ENCODE measurements at regions of chr2 and their contacts with region 1.

Region 1: GRCh38 chr2:1162768-1163584 is 212.3 kb downstream of the SNTG2 start:
- DNase-seq: peak in 7 of 9 donors; percentile 47 to 74 (median 58)
- ATAC-seq: peak; percentile 87
- H3K4me3 ChIP-seq: no peak overlapping the region
- H3K4me3 Mint-ChIP-seq: peak overlapping the region; percentile 56 to 89 (median 82)
- H3K27ac ChIP-seq: peak overlapping the region; percentile 67
- H3K27ac Mint-ChIP-seq: peak overlapping the region; percentile 91 to 100 (median 96)
- H3K4me1 ChIP-seq: peaks cover 0 to 23% of the 10 kb centered on the region in 2 donors
- H3K4me1 Mint-ChIP-seq: peaks cover 20 to 66% (median 52%) of the 10 kb centered on the region in 7 donors
- H3K27me3 ChIP-seq: no peaks in the 10 kb centered on the region
- H3K27me3 Mint-ChIP-seq: no peaks in the 10 kb centered on the region

Region 2: GRCh38 chr2:694906-695510 is 468.0 kb before region 1 on chr2:
- CTCF ChIA-PET with region 1: no interaction called
- POLR2A ChIA-PET with region 1: no interaction called
- intact Hi-C with region 1: no loop called
- DNase-seq: no peak
- ATAC-seq: no peak
- H3K4me3 ChIP-seq: no peak overlapping the region
- H3K4me3 Mint-ChIP-seq: no peak overlapping the region
- H3K27ac ChIP-seq: no peak overlapping the region
- H3K27ac Mint-ChIP-seq: no peak overlapping the region
- H3K4me1 ChIP-seq: no peaks in the 10 kb centered on the region
- H3K4me1 Mint-ChIP-seq: peaks cover 0 to 3% (median 0%) of the 10 kb centered on the region in 7 donors
- H3K27me3 ChIP-seq: no peaks in the 10 kb centered on the region
- H3K27me3 Mint-ChIP-seq: peaks cover 14 to 32% (median 22%) of the 10 kb centered on the region in 5 donors

Region 3: DNA sequence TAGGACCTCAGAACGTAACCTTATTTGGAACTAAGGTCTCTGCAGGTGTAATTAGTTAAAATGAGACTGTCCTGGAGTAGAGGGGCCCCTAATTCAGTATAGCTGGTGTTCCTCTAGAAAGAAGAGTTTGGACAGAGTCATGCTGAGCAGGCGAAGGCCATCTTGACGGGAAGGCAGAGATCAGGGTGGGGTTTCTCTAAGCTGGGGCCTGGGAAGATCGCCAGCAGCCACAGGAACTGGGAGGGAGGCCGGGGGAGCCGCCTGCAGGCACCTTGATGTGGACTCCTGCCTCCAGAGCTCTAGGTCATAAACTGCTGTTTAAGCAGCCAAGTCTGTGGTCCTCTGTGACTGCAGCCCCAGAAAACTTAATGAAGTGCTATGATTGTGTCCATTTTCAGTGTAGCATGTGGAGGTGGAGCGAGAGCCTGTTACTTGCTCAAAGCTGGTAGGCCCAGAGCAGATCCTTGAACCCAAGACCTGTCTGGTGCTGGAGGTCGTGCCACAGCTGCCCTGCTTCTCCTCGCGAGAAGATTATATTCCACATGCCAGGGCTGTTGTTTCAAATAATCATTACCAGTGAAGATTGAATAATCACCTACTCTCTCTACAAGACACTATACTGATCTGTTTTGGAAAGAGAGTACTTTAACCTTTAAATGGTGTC is 356.0 kb after region 1 on chr2:
- CTCF ChIA-PET with region 1: no interaction called
- POLR2A ChIA-PET with region 1: no interaction called
- intact Hi-C with region 1: loop called in 1 of 2 experiments (anchors 10 kb)
- DNase-seq: peak in 1 of 9 donors; percentile 7
- ATAC-seq: peak; percentile 1
- H3K4me3 ChIP-seq: no peak overlapping the region
- H3K4me3 Mint-ChIP-seq: peak overlapping the region in 9 of 10 donors; percentile 23 to 71 (median 53)
- H3K27ac ChIP-seq: peak overlapping the region; percentile 48
- H3K27ac Mint-ChIP-seq: peak overlapping the region; percentile 73 to 94 (median 89)
- H3K4me1 ChIP-seq: peaks cover 0 to 18% of the 10 kb centered on the region in 2 donors
- H3K4me1 Mint-ChIP-seq: peaks cover 16 to 55% (median 44%) of the 10 kb centered on the region in 7 donors
- H3K27me3 ChIP-seq: no peaks in the 10 kb centered on the region
- H3K27me3 Mint-ChIP-seq: no peaks in the 10 kb centered on the region